ENCODE measurements at regions of chr11 and their contacts with region 1.

Region 1: DNA sequence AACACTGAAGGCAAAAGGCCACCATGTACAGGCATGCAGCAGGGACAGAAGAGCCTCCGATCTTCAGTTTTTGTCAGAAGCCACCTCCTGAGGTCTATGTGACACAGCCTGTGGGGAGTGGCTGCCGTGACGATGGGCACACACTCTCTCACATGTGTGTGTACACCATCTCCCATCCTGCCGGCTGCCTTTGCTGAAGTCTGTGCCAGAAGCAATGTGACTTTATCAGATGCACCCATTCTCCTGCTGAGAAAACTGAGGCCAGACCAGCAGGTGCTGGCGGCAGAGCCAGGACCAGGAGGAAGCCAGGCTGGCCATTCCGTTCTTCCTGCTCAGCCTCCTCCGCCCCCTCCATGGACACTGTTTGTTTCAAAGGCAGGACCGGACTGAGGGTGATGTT is 16.7 kb downstream of the SHANK2 start:
- DNase-seq: no peak
- H3K4me3 ChIP-seq: no peak overlapping the region
- H3K27ac ChIP-seq: no peak overlapping the region
- H3K4me1 ChIP-seq: peaks cover 0 to 6% (median 4%) of the 10 kb centered on the region in 4 experiments; a peak in 5 of 7 replicates
- H3K27me3 ChIP-seq: no peaks in the 10 kb centered on the region
- CTCF ChIP-seq: no peak
- EP300 ChIP-seq: no peak
- POLR2A ChIP-seq: no peak
- RAD21 ChIP-seq: no peak

Region 2: DNA sequence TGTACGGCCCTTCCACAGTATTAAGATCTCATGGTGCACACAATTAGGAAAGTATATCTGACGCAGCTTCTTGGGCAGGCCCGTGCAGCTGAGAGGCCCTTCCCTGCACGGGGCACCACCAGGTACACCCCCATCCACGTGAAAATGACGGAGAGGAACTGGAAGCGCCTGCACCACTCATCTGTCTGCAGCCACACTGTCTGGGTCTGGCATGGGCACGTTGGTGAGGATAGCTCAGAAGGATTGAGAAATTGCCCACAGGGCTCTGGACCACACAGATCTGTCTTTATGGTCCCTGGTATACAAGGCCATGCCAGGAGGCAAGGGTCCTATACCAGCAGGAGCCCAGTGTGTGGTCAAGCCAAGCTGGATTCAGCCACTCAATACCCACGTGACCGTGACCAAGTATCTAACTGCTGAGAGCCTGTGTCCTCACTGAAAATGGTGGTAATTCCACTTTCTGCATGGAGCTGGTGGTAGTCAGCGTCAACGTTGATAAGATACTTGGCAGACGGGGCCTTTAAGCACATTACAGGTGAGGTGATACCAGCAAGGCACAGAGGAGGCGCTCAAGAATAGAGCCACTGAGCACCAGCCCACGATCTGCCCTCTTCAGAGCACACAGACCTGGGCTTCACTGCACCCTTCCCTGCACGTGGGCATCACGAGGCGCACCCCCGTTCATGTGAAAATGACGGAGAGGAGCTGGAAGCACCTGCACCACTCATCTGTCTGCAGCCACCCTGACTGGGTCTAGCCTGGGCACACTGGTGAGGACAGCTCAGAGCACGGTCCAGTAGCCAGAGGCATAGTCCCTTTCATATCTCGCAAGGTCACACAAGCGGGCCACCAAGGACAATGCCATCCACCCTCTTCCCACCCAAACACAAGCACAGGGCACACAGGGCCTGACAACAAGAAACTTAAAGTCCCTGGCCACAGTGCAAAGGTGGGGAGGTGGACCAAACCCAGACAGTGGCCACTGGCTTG is 11.8 kb before region 1 on chr11:
- CTCF ChIA-PET with region 1: interaction called, 16 read pairs
- POLR2A ChIA-PET with region 1: interaction called, 3 read pairs
- DNase-seq: no peak
- H3K4me3 ChIP-seq: no peak overlapping the region
- H3K27ac ChIP-seq: no peak overlapping the region
- H3K4me1 ChIP-seq: peaks cover 0 to under 1% (median 0%) of the 10 kb centered on the region in 4 experiments; a peak in 3 of 7 replicates
- H3K27me3 ChIP-seq: no peaks in the 10 kb centered on the region
- CTCF ChIP-seq: peak; percentile 10 to 56 (median 36); a peak in 2 of 4 replicates
- EP300 ChIP-seq: no peak
- POLR2A ChIP-seq: no peak
- RAD21 ChIP-seq: peak; percentile 32 to 43

Region 3: DNA sequence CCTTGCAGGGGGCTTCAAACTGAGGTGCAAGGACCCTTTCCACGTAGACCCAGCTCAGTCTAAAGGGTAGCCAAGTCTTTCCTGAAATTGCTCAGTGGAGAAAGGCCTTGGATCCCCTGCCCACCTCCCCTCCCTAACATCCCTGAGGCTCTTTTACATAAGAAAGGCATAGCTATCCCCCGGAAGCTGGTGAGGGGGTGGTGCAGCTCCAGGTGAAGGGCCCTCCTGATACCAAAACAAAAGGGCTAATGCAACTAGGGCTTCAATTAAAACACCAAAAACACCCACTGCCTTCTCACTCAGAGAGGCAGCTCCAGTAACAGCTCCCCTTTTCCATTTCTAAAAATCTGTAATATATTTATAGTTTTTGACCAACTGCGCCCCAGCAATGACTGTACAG is 10.8 kb after region 1 on chr11:
- CTCF ChIA-PET with region 1: interaction called, 20 read pairs
- POLR2A ChIA-PET with region 1: interaction called, 23 read pairs
- DNase-seq: no peak
- H3K4me3 ChIP-seq: peak overlapping the region in 3 of 4 experiments; percentile 27 to 56 (median 30); a peak in 6 of 8 replicates
- H3K27ac ChIP-seq: peak overlapping the region; percentile 94
- H3K4me1 ChIP-seq: peaks cover 26 to 55% (median 48%) of the 10 kb centered on the region in 4 experiments
- H3K27me3 ChIP-seq: no peaks in the 10 kb centered on the region
- CTCF ChIP-seq: no peak
- EP300 ChIP-seq: peak in 1 of 2 experiments; percentile 82; a peak in 1 of 3 replicates
- POLR2A ChIP-seq: 0 out of 3 replicates have a peak, but pooled peaks of 1 of the 2 experiments have one; percentile 25
- RAD21 ChIP-seq: no peak; a peak in 1 of 4 replicates